ENCODE measurements at regions of chr6 and their contacts with region 1.

Region 1: DNA sequence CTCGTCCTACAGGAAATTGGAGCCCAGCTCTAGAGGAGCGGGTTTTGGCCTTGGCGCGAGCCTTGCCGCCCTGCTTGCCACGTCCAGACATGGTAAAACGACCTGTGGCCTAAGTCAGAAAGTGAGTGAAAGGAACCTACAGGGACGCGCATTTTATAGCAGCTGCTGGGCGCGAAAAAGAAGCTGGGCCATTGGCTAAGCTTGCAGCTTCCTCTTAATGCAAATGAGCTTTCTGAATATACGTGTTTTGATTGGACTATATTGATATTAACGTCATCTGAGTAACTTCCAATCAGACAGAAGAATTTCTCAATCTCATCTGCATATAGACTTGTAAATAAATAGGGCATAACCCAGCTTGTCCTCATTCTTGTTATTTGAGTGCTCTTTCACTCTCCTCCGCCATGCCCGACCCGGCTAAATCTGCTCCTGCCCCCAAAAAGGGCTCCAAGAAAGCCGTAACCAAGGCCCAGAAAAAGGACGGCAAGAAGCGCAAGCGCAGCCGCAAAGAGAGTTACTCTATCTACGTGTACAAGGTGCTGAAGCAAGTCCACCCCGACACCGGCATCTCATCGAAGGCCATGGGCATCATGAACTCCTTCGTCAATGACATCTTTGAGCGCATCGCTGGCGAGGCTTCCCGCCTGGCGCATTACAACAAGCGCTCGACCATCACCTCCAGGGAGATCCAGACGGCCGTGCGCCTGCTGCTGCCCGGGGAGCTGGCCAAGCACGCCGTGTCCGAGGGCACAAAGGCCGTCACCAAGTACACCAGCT is 18.9 kb downstream of the OR2B2 start:
- DNase-seq: peak; percentile 74
- ATAC-seq: peak; percentile 47 to 74

Region 2: DNA sequence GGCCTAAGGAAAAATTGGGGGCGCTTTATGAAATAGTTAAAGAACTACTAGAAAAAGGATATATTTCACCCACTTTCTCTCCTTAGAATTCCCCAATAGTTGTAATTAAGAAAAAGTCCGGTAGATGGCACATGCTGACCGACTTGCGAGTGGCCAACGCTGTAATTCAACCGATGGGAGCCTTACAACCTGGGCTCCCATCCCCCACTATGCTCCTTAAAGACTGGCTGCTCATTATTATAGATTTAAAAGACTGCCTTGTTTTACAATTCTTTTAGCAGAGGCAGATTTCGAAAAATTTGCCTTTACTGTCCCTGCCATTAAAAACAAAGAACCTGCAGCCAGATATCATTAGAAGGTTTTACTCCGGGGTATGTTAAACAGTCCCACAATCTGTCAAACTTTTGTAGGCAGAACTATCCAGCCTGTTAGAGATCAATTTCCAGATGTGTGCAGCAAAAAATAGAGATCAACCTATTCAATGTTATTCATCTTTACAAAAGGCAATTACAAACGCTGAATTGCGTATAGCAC is 704.3 kb before region 1 on chr6:
- intact Hi-C with region 1: loop called in 1 of 2 experiments (anchors 10 kb)
- DNase-seq: peak; percentile 70
- ATAC-seq: peak; percentile 94

Region 3: GRCh38 chr6:27472617-27473400 is 420.4 kb before region 1 on chr6 and contains the start of gene ZNF184:
- intact Hi-C with region 1: loop called in 1 of 2 experiments (anchors 10 kb)
- DNase-seq: peak; percentile 96
- ATAC-seq: peak; percentile 99 to 100
- total RNA-seq, gene ZNF184: 3.5 to 4.3 TPM

Region 4: GRCh38 chr6:27772261-27773001 is 120.8 kb before region 1 on chr6:
- intact Hi-C with region 1: loop called in 1 of 2 experiments (anchors 2 kb)
- DNase-seq: peak; percentile 89
- ATAC-seq: peak; percentile 95 to 98

Region 5: DNA sequence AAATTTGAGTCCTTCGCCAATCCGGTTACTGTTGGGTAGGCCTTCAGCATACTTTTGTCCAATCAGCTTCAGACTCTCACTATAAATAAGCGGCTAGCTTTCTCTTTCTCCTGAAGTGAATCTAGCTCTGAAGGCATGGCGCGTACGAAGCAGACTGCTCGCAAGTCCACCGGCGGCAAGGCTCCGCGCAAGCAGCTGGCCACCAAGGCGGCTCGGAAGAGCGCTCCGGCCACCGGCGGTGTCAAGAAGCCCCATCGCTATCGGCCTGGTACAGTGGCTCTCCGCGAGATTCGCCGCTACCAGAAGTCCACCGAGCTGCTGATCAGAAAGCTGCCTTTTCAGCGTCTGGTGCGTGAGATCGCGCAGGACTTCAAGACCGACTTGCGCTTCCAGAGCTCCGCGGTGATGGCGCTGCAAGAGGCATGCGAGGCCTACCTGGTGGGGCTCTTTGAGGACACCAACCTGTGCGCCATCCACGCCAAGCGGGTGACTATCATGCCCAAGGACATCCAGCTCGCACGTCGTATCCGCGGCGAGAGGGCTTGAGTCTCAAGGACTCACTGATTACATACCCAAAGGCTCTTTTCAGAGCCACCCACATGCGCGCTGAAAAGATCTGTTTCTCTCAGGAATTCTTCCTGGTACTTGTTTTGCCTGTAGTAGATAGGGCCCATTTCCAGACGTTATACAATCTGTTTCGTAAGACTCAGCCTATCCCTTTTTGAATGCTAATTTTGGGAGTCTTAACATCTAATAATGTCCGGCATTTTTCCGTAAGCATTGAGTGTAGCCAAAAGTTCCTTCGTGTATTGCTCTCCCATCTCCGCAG is 83.1 kb before region 1 on chr6:
- intact Hi-C with region 1: loop called in 1 of 2 experiments (anchors 10 kb)
- DNase-seq: peak; percentile 64
- ATAC-seq: peak; percentile 74 to 82

Region 6: GRCh38 chr6:27838058-27838944 is 54.9 kb before region 1 on chr6:
- intact Hi-C with region 1: loop called in 1 of 2 experiments (anchors 2 kb)
- DNase-seq: peak; percentile 77
- ATAC-seq: peak; percentile 91 to 95

Region 7: DNA sequence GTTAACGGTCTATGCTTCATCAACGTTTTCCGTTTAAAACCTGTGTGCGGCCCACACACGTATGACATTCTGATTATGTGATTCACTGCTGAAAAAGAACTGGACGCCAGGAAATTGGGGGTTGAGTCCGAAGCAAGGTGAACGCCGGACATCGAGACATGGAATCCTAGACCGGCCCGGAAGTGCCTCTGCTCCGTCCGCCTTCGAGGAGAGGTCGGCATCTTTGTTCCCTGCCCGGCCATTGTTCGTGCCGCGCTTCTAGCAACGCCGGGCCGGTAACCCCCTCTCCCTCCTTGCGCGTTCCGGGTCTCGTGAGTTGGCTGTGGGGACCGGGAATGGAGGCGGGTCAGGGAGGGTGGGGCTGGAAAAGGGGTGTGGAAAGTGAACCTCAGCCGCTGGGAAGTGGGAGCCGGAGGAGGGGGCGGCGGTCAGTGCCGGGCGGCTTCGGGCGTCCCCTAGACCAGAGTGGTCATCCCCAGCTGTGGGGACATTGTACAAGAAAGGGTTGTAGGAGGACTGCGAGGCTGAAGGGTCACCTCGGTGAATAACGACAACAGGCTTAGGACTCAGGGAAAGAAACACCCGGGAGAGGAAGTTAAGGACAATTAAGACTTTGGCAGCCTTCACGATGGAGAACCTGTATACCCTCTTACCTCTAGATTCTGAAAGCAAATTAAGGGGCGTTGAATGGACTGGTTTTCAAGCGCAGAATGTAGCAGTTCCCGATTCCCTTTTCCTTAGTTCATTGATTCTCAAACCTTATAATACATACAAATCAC is 332.0 kb after region 1 on chr6 and contains the start of gene ZSCAN9:
- intact Hi-C with region 1: no loop called
- DNase-seq: peak; percentile 92
- ATAC-seq: peak; percentile 98 to 100
- total RNA-seq, gene ZSCAN9: 9.2 to 9.6 TPM

Measured in left cardiac atrium (tissue), 4 donors.